ENCODE measurements at regions of chr3 and their contacts with region 1.

Region 1: DNA sequence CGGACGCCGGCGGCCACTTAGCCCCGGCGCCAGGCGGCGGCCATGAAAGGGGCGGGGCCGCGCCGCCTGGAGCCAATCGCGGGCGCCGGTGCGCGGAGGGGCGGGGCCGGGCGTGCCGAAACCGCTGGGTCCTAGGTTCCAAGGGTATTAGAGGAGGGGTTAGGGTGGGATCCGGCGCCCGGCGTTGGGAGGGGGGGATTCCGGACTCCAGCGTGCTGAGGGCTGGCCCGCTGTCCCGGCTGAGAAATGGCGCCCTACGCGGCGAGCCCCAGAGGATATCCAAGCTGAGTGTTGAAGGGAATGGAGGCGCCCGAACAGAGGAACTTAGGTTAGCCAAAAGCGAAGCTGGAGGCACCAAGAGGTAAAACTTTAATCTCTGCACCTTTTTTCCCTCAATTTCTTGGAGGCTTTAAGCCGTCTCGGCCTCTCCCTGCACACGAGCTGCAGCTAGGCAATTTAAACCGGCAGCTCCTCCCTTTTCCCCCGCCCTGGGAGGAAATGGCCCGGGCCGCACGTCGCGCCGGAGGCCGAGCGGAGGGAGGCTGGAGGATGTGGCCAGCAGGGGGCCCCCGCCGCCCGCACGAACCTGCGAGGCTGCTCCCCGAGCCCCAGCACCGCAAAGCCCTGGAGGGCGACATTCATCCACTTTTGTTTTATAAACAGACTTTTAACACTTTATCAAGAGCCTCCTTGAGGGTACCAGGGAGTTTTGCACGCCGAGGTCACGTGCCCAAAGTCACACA is at the start of gene XXYLT1:
- DNase-seq: peak; percentile 95
- H3K4me3 ChIP-seq: peak within 1 kb of the TSS; percentile 67
- H3K27ac ChIP-seq: peak within 1 kb of the TSS; percentile 83
- H3K4me1 ChIP-seq: peaks cover 16% of the 10 kb centered on the region
- H3K27me3 ChIP-seq: no peaks in the 10 kb centered on the region
- CTCF ChIP-seq: peak; percentile 99
- total RNA-seq, gene XXYLT1: 49.8 and 53.9 TPM in 2 replicates

Region 2: GRCh38 chr3:195297446-195297845 is 26.2 kb after region 1 on chr3:
- CTCF ChIA-PET with region 1: no interaction called
- POLR2A ChIA-PET with region 1: interaction called, 10 read pairs
- intact Hi-C with region 1: no loop called
- DNase-seq: no peak
- H3K4me3 ChIP-seq: no peak overlapping the region
- H3K27ac ChIP-seq: no peak overlapping the region
- H3K4me1 ChIP-seq: no peaks in the 10 kb centered on the region
- H3K27me3 ChIP-seq: no peaks in the 10 kb centered on the region
- CTCF ChIP-seq: no peak

Region 3: GRCh38 chr3:195442573-195443390 is 171.5 kb after region 1 on chr3 and contains the start of gene ACAP2:
- CTCF ChIA-PET with region 1: interaction called, 4 read pairs
- POLR2A ChIA-PET with region 1: interaction called, 11 read pairs
- intact Hi-C with region 1: loop called (anchors 5 kb)
- DNase-seq: peak; percentile 100
- H3K4me3 ChIP-seq: peak within 1 kb of the TSS; percentile 94
- H3K27ac ChIP-seq: peak within 1 kb of the TSS; percentile 92
- H3K4me1 ChIP-seq: peaks cover 22% of the 10 kb centered on the region
- H3K27me3 ChIP-seq: no peaks in the 10 kb centered on the region
- CTCF ChIP-seq: no peak
- total RNA-seq, gene ACAP2: 45.5 and 47.4 TPM in 2 replicates

Region 4: GRCh38 chr3:195522254-195523023 is 251.2 kb after region 1 on chr3:
- CTCF ChIA-PET with region 1: interaction called, 11 read pairs
- POLR2A ChIA-PET with region 1: no interaction called
- intact Hi-C with region 1: loop called (anchors 1 kb)
- DNase-seq: peak; percentile 64
- H3K4me3 ChIP-seq: no peak overlapping the region
- H3K27ac ChIP-seq: no peak overlapping the region
- H3K4me1 ChIP-seq: no peaks in the 10 kb centered on the region
- H3K27me3 ChIP-seq: no peaks in the 10 kb centered on the region
- CTCF ChIP-seq: peak; percentile 76

Region 5: GRCh38 chr3:195540526-195540925 is 269.2 kb after region 1 on chr3:
- CTCF ChIA-PET with region 1: interaction called, 10 read pairs
- POLR2A ChIA-PET with region 1: no interaction called
- intact Hi-C with region 1: no loop called
- DNase-seq: no peak
- H3K4me3 ChIP-seq: no peak overlapping the region
- H3K27ac ChIP-seq: no peak overlapping the region
- H3K4me1 ChIP-seq: peaks cover 15% of the 10 kb centered on the region
- H3K27me3 ChIP-seq: no peaks in the 10 kb centered on the region
- CTCF ChIP-seq: no peak

Region 6: DNA sequence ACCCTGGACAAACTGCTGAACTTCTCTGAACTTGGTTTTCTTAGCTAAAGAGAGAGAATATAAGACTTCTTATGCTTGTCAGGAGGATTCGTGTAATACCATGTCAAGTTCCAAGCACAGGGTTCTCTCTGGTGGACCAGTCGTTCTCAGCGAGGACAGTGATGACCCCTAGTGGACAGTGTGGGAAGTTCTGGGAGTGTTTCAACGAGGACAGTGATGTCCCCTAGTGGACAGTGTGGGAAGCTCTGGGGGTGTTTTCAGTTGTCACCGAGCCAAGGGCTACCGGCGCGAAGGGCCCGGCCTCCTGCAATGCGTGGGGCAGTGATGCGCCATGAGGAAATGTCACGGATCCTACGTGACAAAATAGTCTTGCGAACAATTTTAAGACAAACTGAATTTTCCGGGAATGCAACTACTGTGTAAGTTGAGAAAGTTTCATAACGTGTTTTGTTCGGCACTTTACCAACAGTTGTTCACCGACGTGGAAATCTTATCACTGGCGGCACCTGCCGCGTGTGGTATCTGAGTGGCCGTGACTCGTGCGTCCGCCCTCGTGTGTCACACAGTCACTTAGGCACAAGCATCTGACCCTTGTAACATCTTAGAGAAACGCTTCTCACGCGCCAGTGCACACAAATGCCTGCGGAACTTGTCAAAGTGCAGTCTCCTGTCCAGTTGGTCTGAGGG is 579.7 kb after region 1 on chr3:
- CTCF ChIA-PET with region 1: no interaction called
- POLR2A ChIA-PET with region 1: no interaction called
- intact Hi-C with region 1: loop called (anchors 2 kb)
- DNase-seq: peak; percentile 93
- H3K4me3 ChIP-seq: no peak overlapping the region
- H3K27ac ChIP-seq: no peak overlapping the region
- H3K4me1 ChIP-seq: no peaks in the 10 kb centered on the region
- H3K27me3 ChIP-seq: no peaks in the 10 kb centered on the region
- CTCF ChIP-seq: peak; percentile 100

Region 7: GRCh38 chr3:196096382-196096953 is 825.2 kb after region 1 on chr3:
- CTCF ChIA-PET with region 1: no interaction called
- POLR2A ChIA-PET with region 1: no interaction called
- intact Hi-C with region 1: no loop called
- DNase-seq: no peak
- H3K4me3 ChIP-seq: no peak overlapping the region
- H3K27ac ChIP-seq: no peak overlapping the region
- H3K4me1 ChIP-seq: no peaks in the 10 kb centered on the region
- H3K27me3 ChIP-seq: no peaks in the 10 kb centered on the region
- CTCF ChIP-seq: no peak